GM12878 (cell line): ENCODE measurements at regions of chr2 and their contacts with region 1.

Region 1: DNA sequence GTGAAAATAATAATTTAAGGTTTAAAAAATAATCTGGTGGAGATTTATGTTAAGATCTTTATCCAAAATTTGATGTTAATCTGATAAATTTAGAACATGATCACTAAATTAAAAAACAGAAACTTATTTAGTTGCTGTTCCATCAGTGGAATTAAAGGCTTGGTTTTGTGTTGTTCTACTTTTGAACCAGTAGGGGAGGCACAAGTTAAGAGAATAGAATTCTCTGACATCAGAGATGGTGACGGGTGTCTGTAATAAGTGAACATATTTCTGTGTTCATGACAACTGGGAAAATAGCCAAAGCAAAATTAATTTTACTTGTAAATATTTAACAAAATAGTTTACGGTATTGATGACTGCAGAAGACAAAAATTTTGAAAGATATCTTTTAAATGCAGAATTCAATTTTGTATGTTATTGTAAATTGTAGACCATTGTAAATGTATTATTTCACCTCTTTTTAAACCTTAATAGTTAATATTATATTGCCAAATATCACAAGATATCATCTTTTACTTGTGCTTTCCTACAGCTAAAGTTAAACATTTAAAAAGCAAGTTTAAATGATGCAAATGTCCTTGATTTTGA is 106.0 kb downstream of the UBR3 start:
- DNase-seq: no peak
- ATAC-seq: peak; percentile 82
- H3K4me3 ChIP-seq: no peak overlapping the region
- H3K27ac ChIP-seq: no peak overlapping the region
- H3K4me1 ChIP-seq: no peaks in the 10 kb centered on the region
- H3K27me3 ChIP-seq: no peaks in the 10 kb centered on the region
- CTCF ChIP-seq: peak; percentile 67 to 79 (median 70)
- EP300 ChIP-seq: no peak
- POLR2A ChIP-seq: no peak
- RAD21 ChIP-seq: peak; percentile 92

Region 2: GRCh38 chr2:169452080-169452479 is 481.1 kb before region 1 on chr2:
- CTCF ChIA-PET with region 1: interaction called, 10 read pairs
- POLR2A ChIA-PET with region 1: no interaction called
- RAD21 ChIA-PET with region 1: interaction called, 8 read pairs
- SMC1A ChIA-PET with region 1: interaction called, 6 read pairs
- in situ Hi-C with region 1: no loop called
- intact Hi-C with region 1: loop called (anchors 2 kb)
- DNase-seq: no peak
- ATAC-seq: peak; percentile 79
- H3K4me3 ChIP-seq: no peak overlapping the region
- H3K27ac ChIP-seq: no peak overlapping the region
- H3K4me1 ChIP-seq: no peaks in the 10 kb centered on the region
- H3K27me3 ChIP-seq: no peaks in the 10 kb centered on the region
- CTCF ChIP-seq: peak; percentile 25 to 53 (median 37); a peak in 4 of 6 replicates
- EP300 ChIP-seq: no peak
- POLR2A ChIP-seq: no peak
- RAD21 ChIP-seq: peak; percentile 40; the same call in 1 of the 2 replicates

Region 3: GRCh38 chr2:169528271-169528701 is 404.9 kb before region 1 on chr2:
- CTCF ChIA-PET with region 1: interaction called, 7 read pairs
- POLR2A ChIA-PET with region 1: no interaction called
- RAD21 ChIA-PET with region 1: no interaction called
- SMC1A ChIA-PET with region 1: interaction called, 4 read pairs
- in situ Hi-C with region 1: no loop called
- intact Hi-C with region 1: loop called (anchors 1 kb)
- DNase-seq: peak; percentile 45
- ATAC-seq: peak; percentile 100
- H3K4me3 ChIP-seq: no peak overlapping the region
- H3K27ac ChIP-seq: no peak overlapping the region
- H3K4me1 ChIP-seq: no peaks in the 10 kb centered on the region
- H3K27me3 ChIP-seq: no peaks in the 10 kb centered on the region
- CTCF ChIP-seq: peak; percentile 82 to 88 (median 82)
- EP300 ChIP-seq: no peak
- POLR2A ChIP-seq: no peak
- RAD21 ChIP-seq: peak; percentile 70

Region 4: GRCh38 chr2:169824373-169825333 is 108.6 kb before region 1 on chr2 and contains the start of gene METTL5:
- CTCF ChIA-PET with region 1: interaction called, 16 read pairs
- POLR2A ChIA-PET with region 1: interaction called, 3 read pairs
- RAD21 ChIA-PET with region 1: interaction called, 6 read pairs
- SMC1A ChIA-PET with region 1: interaction called, 9 read pairs
- in situ Hi-C with region 1: no loop called
- intact Hi-C with region 1: loop called (anchors 1 kb)
- DNase-seq: peak; percentile 20
- ATAC-seq: peak; percentile 81
- H3K4me3 ChIP-seq: peak within 1 kb of the TSS; percentile 81
- H3K27ac ChIP-seq: peak within 1 kb of the TSS; percentile 62
- H3K4me1 ChIP-seq: peaks cover 10% of the 10 kb centered on the region; the same call in 1 of the 2 replicates
- H3K27me3 ChIP-seq: no peaks in the 10 kb centered on the region
- CTCF ChIP-seq: peak; percentile 85 to 99 (median 98)
- EP300 ChIP-seq: no peak; a peak in 1 of 4 replicates
- POLR2A ChIP-seq: peak; percentile 95
- RAD21 ChIP-seq: peak; percentile 62
- polyA plus RNA-seq, gene METTL5: 198 to 204 TPM

Region 5: DNA sequence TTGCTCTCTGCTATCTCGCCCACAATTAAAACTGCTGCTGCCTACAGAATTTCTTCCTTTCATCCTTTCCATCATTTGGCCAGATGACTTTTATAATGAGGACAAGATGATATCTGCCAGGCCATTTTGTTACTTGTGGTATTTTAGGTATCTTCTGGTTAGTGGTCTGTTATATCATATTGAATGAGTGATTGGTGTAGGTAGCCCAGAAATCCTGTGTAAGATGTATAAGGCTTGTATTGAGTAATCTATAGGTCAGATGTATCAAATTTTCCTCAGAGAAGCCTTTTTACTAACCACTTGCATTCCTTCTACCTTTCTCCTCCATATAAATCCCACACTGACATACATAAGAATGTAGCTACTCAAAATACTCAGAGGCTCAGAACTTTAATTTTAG is 12.3 kb after region 1 on chr2:
- CTCF ChIA-PET with region 1: interaction called, 19 read pairs
- POLR2A ChIA-PET with region 1: interaction called, 3 read pairs
- RAD21 ChIA-PET with region 1: interaction called, 6 read pairs
- SMC1A ChIA-PET with region 1: interaction called, 5 read pairs
- in situ Hi-C with region 1: no loop called
- intact Hi-C with region 1: no loop called
- DNase-seq: no peak
- ATAC-seq: no peak
- H3K4me3 ChIP-seq: no peak overlapping the region
- H3K27ac ChIP-seq: no peak overlapping the region
- H3K4me1 ChIP-seq: no peaks in the 10 kb centered on the region
- H3K27me3 ChIP-seq: no peaks in the 10 kb centered on the region
- CTCF ChIP-seq: no peak
- EP300 ChIP-seq: no peak
- POLR2A ChIP-seq: no peak
- RAD21 ChIP-seq: no peak

Region 6: GRCh38 chr2:170361090-170361936 is 428.1 kb after region 1 on chr2:
- CTCF ChIA-PET with region 1: interaction called, 7 read pairs
- POLR2A ChIA-PET with region 1: interaction called, 3 read pairs
- RAD21 ChIA-PET with region 1: interaction called, 3 read pairs
- SMC1A ChIA-PET with region 1: interaction called, 9 read pairs
- in situ Hi-C with region 1: no loop called
- intact Hi-C with region 1: loop called (anchors 2 kb)
- DNase-seq: peak; percentile 26
- ATAC-seq: peak; percentile 97
- H3K4me3 ChIP-seq: no peak overlapping the region
- H3K27ac ChIP-seq: no peak overlapping the region
- H3K4me1 ChIP-seq: no peaks in the 10 kb centered on the region
- H3K27me3 ChIP-seq: no peaks in the 10 kb centered on the region
- CTCF ChIP-seq: peak; percentile 76 to 87 (median 80)
- EP300 ChIP-seq: no peak
- POLR2A ChIP-seq: no peak
- RAD21 ChIP-seq: peak; percentile 65